ENCODE measurements at regions of chr2 and their contacts with region 1.

Region 1: DNA sequence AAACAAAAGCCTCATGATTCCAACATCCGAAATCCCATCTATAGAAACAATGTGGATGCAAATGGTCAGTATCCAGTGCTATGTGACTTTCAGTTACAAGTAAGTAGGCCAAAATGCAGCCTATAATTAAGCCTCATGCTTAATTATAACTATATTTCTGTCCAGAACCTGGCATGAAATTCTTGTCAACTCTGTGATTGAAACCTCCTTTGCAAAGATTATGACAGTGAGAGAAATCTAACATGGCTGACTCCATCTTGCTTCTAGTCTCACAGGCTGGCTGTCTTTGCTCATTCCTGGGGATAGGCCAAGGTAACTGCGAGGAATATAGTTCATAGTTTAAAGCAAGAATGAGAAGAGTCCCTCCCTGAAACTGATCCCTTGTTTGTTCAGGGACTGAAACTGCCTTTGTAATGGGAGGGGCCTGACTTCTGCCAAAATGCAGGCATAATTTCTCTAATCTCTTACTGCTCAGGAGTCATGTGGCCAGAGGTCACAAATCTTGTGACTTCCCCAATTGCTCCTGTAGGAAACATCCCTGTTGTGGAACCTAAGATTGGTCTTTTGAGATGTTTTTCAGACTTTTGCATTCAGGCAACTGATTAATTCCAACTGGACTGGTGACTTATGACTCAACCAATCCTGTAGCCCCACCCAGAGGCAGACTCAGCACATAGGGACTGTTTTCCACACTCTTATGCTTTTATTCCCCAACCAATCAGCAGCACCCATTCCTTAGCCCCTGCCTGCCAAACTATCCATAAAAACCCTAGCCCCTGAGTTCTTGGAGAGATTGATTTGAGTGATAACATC is 84.5 kb upstream of the TLK1 start:
- DNase-seq: peak in 1 of 2 experiments; percentile 22
- H3K4me3 ChIP-seq: no peak overlapping the region
- H3K4me3 Mint-ChIP-seq: no peak overlapping the region
- H3K27ac Mint-ChIP-seq: no peak overlapping the region
- H3K4me1 ChIP-seq: no peaks in the 10 kb centered on the region
- H3K4me1 Mint-ChIP-seq: peaks cover 6% of the 10 kb centered on the region
- H3K27me3 ChIP-seq: no peaks in the 10 kb centered on the region
- H3K27me3 Mint-ChIP-seq: no peaks in the 10 kb centered on the region
- CTCF ChIP-seq: no peak

Region 2: GRCh38 chr2:170928824-170929685 is 316.1 kb before region 1 on chr2 and contains the start of gene GORASP2:
- CTCF ChIA-PET with region 1: no interaction called
- POLR2A ChIA-PET with region 1: interaction called, 12 read pairs
- intact Hi-C with region 1: no loop called
- DNase-seq: peak; percentile 98 to 100
- H3K4me3 ChIP-seq: peak within 1 kb of the TSS; percentile 98
- H3K4me3 Mint-ChIP-seq: peak within 1 kb of the TSS; percentile 98
- H3K27ac Mint-ChIP-seq: peak within 1 kb of the TSS; percentile 99
- H3K4me1 ChIP-seq: peaks cover 21% of the 10 kb centered on the region
- H3K4me1 Mint-ChIP-seq: peaks cover 29% of the 10 kb centered on the region
- H3K27me3 ChIP-seq: no peaks in the 10 kb centered on the region
- H3K27me3 Mint-ChIP-seq: no peaks in the 10 kb centered on the region
- CTCF ChIP-seq: peak; percentile 87 to 91
- total RNA-seq, gene GORASP2: 124 and 143 TPM in 2 replicates